ENCODE measurements at regions of chr10 and their contacts with region 1.

Region 1: DNA sequence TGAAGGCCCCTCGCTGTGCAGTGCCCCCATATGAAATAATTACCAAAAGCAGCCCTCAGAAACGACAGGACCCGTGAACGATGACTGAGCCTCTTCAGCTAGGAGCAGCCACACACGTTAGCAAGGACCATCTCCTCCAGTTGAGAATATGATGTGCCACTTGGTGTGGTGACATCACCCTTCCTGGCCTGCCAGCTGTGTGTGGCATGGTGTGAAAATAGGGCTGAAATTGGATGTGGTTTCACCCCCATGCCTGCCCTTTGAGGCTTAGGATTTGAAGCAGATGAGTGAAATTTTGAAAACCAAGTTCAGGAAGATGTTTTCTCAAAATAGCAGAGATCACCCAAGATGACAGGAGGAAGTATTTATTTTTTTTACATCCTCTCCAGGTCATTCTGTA is 49.1 kb upstream of the BTBD16 start:
- DNase-seq: no peak
- H3K4me3 ChIP-seq: no peak overlapping the region
- H3K27ac ChIP-seq: no peak overlapping the region
- H3K4me1 ChIP-seq: no peaks in the 10 kb centered on the region
- H3K27me3 ChIP-seq: no peaks in the 10 kb centered on the region
- CTCF ChIP-seq: no peak

Region 2: DNA sequence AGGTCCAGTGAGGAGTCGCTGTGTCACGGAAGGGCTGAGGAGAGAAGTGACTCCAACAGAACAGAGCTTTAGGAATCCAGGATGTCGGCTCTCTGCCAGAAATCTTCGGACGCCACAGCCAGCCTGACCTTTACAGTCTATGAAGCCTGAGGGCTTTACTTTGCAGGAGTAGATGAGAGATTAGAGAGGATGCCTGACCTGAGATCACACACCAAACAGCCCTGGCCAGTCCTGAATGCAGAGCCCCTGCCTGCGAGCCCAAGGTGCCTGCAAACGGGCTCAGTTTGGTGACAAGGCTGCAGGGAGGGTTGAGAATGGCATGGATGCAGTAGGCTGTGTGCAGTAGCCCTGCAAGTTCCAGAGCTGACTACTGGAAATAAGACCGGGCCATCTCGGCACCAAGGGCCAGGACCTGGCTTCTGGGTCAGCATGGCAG is 1522.0 kb after region 1 on chr10:
- intact Hi-C with region 1: loop called (anchors 10 kb)
- DNase-seq: no peak
- H3K4me3 ChIP-seq: no peak overlapping the region
- H3K27ac ChIP-seq: no peak overlapping the region
- H3K4me1 ChIP-seq: no peaks in the 10 kb centered on the region
- H3K27me3 ChIP-seq: no peaks in the 10 kb centered on the region
- CTCF ChIP-seq: no peak

Measured in colonic mucosa (tissue), 4 donors.